ENCODE measurements at regions of chr6 and their contacts with region 1.

Region 1: DNA sequence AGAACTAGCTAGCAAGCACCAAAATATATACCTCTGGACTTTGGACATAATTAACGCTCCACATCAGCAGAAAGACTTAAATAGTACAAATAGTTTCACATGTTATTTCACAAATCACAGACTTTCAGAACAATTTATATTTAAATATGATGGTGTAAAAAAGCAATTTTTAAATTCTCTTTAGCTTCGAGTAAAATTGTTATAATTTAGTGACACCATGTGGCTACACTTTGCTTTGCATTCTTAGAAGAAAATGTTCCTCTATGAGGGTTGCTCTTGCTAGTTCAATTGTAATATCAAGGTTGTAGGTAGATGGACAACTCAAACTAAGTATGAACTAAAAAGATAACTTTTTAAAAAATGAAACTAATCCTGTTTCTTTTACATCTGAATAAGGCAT is 69.0 kb downstream of the BTBD9 start:
- DNase-seq: no peak
- H3K4me3 Mint-ChIP-seq: no peak overlapping the region
- H3K27ac Mint-ChIP-seq: peak overlapping the region; percentile 93
- H3K4me1 Mint-ChIP-seq: peaks cover 21% of the 10 kb centered on the region
- H3K27me3 Mint-ChIP-seq: no peaks in the 10 kb centered on the region

Region 2: DNA sequence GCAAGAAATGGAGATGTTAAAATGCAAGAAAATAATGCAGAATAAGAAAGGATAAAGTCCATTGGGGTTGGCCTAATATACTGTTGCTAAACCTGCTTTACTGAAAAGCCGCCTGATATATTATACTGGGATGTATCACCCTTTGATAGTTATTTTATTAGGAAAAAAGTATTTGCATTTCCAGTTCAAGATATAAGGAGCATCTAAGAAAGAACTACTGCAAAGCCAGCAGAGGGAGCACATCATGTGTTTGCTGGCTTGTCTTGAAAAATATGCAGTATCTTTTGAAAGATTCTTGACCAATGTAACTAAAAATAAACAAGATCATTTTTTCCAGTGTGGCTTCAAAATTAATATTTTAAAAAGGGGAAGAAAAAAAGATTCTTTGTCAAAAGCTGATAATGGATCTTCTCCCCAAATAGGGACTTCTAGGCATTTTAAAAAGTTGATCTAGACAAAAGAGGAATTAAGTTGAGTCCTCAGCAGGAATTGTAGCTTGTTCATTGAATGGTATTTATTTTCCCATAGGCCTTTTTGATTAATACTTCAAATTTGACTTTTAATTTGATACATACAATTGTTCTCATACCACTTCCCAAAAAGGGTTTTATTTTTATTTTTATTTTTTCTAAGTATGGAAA is 536.4 kb before region 1 on chr6:
- CTCF ChIA-PET with region 1: interaction called, 19 read pairs
- DNase-seq: no peak
- H3K4me3 Mint-ChIP-seq: no peak overlapping the region
- H3K27ac Mint-ChIP-seq: no peak overlapping the region
- H3K4me1 Mint-ChIP-seq: peaks cover 13% of the 10 kb centered on the region
- H3K27me3 Mint-ChIP-seq: no peaks in the 10 kb centered on the region

Region 3: DNA sequence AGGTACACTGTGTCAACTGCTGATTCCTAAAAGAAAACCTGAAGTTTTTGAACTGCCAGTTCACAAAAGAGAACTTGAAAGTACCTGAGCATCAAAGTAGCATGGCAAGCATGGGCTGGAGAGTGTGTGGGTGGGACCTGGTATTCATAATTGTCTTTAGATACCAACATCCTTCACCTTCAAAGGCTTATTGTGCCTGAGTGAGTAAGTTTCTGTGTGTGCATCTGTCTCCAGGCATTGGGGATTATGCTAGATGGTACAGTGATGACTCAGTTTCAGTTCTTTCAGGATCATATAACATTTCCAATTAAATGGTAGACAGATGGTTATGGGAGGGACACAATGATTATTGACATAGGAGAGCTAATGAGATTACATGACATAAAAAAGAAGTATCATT is 512.8 kb before region 1 on chr6:
- CTCF ChIA-PET with region 1: no interaction called
- DNase-seq: no peak
- H3K4me3 Mint-ChIP-seq: no peak overlapping the region
- H3K27ac Mint-ChIP-seq: no peak overlapping the region
- H3K4me1 Mint-ChIP-seq: peaks cover 13% of the 10 kb centered on the region
- H3K27me3 Mint-ChIP-seq: no peaks in the 10 kb centered on the region

Region 4: DNA sequence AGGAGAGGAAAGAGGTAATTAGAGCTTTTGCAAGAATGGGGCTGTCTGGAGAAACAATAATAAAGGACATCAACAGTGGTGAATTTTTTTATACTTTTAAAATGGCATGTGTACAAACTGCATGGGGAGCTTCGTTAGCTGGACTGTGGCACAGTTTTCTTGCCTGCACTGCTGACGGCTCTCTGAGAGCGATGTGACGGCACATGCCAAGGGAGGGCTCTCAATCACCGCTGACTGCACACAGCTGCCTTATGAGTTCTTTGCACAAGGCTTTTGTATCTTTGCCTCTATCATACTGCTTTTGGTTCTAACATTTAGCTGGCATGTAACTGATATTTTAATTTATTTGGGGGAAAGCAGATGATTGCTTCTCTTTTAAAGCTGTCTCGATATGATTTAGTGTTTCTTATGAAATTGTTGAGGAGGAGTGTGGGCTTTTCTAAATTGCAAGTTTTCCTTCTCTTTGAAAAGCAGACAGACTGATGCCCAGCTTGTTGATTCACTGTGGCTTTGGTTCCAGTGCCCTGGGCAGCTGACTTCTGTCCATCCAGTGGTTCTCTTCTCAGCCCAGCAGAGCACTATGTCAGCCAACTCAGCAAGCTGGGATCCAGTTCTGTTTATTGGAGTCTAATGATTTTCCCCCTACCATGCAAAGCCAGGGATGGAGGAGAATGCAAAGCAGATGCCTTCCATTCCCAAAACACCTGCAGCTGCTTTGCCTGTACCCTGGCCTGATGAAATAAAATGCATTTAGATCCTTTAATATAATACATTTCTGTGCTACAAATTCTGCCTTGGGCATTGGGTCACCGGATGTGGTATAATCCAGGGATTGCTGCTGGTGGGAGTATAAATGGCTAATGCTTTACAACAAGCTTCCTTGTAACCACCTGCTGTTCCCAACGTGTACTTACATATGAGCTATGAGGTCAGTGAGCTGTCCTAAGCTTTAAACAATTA is 427.3 kb before region 1 on chr6:
- CTCF ChIA-PET with region 1: no interaction called
- DNase-seq: no peak
- H3K4me3 Mint-ChIP-seq: no peak overlapping the region
- H3K27ac Mint-ChIP-seq: no peak overlapping the region
- H3K4me1 Mint-ChIP-seq: peaks cover 7% of the 10 kb centered on the region
- H3K27me3 Mint-ChIP-seq: no peaks in the 10 kb centered on the region

Region 5: GRCh38 chr6:38337819-38338465 is 232.8 kb before region 1 on chr6:
- CTCF ChIA-PET with region 1: no interaction called
- DNase-seq: no peak
- H3K4me3 Mint-ChIP-seq: no peak overlapping the region
- H3K27ac Mint-ChIP-seq: no peak overlapping the region
- H3K4me1 Mint-ChIP-seq: no peaks in the 10 kb centered on the region
- H3K27me3 Mint-ChIP-seq: no peaks in the 10 kb centered on the region

Region 6: GRCh38 chr6:38493931-38494547 is 76.7 kb before region 1 on chr6:
- CTCF ChIA-PET with region 1: interaction called, 10 read pairs
- DNase-seq: peak; percentile 86
- H3K4me3 Mint-ChIP-seq: no peak overlapping the region
- H3K27ac Mint-ChIP-seq: no peak overlapping the region
- H3K4me1 Mint-ChIP-seq: peaks cover 2% of the 10 kb centered on the region
- H3K27me3 Mint-ChIP-seq: no peaks in the 10 kb centered on the region

Region 7: DNA sequence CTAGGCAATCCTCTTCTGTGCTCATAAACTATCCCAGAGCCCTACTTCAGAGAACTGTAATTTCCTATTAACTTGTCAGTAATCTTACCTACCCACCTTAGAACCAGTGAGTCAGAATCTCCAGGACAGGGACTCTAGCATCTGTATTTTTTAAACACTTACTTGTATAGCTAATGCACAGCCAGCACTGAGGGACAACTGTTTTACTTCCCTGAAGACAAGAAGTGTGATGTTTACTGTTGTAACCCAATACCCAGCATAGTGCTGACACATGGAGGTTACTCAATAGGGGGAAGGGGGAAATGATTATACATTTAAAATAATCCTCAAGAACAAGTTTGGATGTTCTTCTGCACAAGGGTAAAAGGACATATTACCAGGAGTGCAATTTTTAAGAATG is 61.9 kb before region 1 on chr6:
- CTCF ChIA-PET with region 1: no interaction called
- DNase-seq: no peak
- H3K4me3 Mint-ChIP-seq: no peak overlapping the region
- H3K27ac Mint-ChIP-seq: no peak overlapping the region
- H3K4me1 Mint-ChIP-seq: no peaks in the 10 kb centered on the region
- H3K27me3 Mint-ChIP-seq: no peaks in the 10 kb centered on the region